ENCODE measurements at regions of chr5 and their contacts with region 1.

Region 1: GRCh38 chr5:8720506-8720905 is 825.4 kb downstream of the SEMA5A start:
- DNase-seq: no peak
- H3K4me3 ChIP-seq: no peak overlapping the region
- H3K27ac ChIP-seq: no peak overlapping the region
- H3K27me3 ChIP-seq: no peaks in the 10 kb centered on the region
- CTCF ChIP-seq: no peak

Region 2: DNA sequence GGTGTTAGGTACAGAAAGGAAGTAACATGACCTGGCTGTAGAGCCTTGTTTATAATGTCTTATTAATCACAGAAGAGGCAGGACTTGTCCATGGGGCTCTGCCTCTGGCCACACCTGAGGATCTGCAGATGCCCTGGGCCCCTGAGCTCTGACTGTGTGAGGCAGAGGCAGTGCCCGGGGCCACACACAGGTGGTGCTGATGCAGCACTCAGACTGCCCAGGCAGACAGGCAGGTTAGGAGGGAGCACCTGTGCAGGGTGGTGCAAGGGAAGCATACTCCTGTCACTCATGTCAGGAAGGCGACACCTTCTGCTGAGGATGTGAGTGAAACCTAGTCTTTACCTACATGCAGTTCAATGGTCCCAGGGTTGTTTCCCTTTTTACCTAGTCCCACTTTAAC is 958.2 kb before region 1 on chr5:
- CTCF ChIA-PET with region 1: no interaction called
- POLR2A ChIA-PET with region 1: no interaction called
- DNase-seq: no peak
- H3K4me3 ChIP-seq: no peak overlapping the region
- H3K27ac ChIP-seq: no peak overlapping the region
- H3K27me3 ChIP-seq: no peaks in the 10 kb centered on the region
- CTCF ChIP-seq: no peak

Region 3: DNA sequence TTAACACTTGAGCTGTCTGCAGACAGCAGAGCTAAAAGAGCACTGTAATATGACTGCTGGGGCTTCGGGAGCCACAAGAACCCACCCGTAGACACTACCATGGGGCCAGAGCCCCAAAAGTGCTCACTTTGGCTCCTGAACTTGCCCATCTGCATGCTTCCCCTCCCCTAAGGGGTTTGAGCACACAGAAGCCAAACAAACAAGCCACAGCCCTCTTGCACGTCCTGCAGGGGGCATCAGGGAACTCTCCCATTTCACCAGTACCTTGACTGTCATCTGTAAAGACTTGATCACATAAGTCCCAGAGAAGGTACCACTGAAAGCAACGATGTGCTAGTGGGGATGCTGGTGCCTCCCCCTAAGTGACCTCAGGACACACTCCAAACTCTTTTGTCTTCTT is 143.5 kb after region 1 on chr5:
- CTCF ChIA-PET with region 1: interaction called, 12 read pairs
- POLR2A ChIA-PET with region 1: no interaction called
- DNase-seq: no peak
- H3K4me3 ChIP-seq: no peak overlapping the region
- H3K27ac ChIP-seq: no peak overlapping the region
- H3K27me3 ChIP-seq: no peaks in the 10 kb centered on the region
- CTCF ChIP-seq: peak; percentile 53

Region 4: GRCh38 chr5:9437741-9438240 is 717.3 kb after region 1 on chr5:
- CTCF ChIA-PET with region 1: no interaction called
- POLR2A ChIA-PET with region 1: no interaction called
- DNase-seq: no peak
- H3K4me3 ChIP-seq: no peak overlapping the region
- H3K27ac ChIP-seq: no peak overlapping the region
- H3K27me3 ChIP-seq: no peaks in the 10 kb centered on the region
- CTCF ChIP-seq: no peak